Activated CD4-positive, alpha-beta memory T cell treated with anti-CD3 and anti-CD28 coated beads, Interleukin-2, amount 10 ng/mL, durations not matched to agents 7 days and 5 days (primary cell): ENCODE measurements at regions of chr2 and their contacts with region 1.

Region 1: DNA sequence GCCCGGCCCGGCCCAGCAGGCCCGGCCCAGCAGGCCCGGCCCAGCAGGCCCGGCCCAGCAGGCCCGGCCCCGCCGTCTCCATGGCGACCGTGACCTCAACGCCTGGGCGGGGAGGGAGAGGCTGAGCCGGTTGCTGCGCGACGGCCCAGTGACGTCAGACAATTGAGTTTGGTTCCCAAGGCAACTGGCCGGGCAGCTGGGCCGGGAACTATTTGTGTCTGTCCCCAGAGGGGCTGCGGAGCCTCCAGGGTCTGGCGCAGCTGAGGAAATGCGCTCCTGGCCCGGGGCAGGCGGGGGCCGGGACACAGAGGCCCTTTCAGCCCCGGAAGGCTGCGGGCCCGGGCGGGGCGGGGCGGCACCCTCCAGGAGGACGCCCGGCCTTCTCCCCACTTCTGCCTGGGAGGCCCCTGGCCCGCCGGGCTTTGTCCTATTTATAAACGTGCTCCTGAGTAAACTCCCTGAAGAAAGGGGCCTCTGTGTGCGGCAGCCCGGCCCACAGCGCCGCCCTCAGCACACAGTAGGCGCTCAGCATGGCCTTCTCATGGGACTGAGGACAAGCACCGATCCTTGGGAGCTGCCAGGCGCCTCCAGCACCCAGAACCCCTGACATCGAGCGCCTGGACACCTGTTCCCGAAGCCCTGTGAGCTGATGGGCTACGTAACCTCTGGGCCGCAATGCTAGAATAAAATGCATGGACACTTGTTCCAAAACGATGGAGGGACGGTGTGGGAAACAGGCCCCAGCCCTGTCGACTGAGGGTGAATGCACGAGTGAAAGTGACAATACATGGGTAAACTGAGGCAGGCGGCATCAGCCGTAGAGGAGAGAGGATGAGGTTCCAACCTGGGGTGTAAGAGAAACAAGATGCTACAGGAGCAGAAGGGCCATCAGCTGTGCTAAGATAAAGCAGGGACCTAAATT is 12.3 kb downstream of the TEX44 start:
- DNase-seq: peak; percentile 95
- H3K4me3 Mint-ChIP-seq: peak overlapping the region; percentile 66
- H3K27ac Mint-ChIP-seq: peak overlapping the region; percentile 31
- H3K4me1 Mint-ChIP-seq: peaks cover 17% of the 10 kb centered on the region
- H3K27me3 Mint-ChIP-seq: no peaks in the 10 kb centered on the region

Region 2: GRCh38 chr2:231482806-231483391 is 122.0 kb before region 1 on chr2:
- CTCF ChIA-PET with region 1: interaction called, 20 read pairs
- POLR2A ChIA-PET with region 1: interaction called, 6 read pairs
- DNase-seq: peak; percentile 78
- H3K4me3 Mint-ChIP-seq: peak overlapping the region; percentile 76
- H3K27ac Mint-ChIP-seq: peak overlapping the region; percentile 83
- H3K4me1 Mint-ChIP-seq: peaks cover 23% of the 10 kb centered on the region
- H3K27me3 Mint-ChIP-seq: no peaks in the 10 kb centered on the region

Region 3: DNA sequence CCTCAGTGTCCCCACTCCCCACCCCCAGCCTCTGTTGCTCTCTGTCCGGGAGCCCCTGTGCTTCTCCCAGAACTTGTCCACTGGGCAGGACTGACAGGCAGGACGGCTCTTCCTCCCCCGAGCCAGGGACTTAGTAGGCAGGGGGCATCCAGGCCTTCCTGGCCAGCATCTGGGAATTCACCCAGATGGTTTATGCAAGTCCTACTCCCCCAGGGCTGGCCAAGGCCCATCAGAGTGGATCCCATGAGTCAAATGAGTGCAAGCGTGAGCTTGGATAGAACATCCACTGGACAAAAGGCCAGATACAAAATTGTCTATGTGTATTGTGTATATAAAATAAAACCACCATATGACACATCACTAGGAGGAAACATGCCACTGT is 82.2 kb before region 1 on chr2:
- CTCF ChIA-PET with region 1: interaction called, 52 read pairs
- POLR2A ChIA-PET with region 1: interaction called, 5 read pairs
- DNase-seq: no peak
- H3K4me3 Mint-ChIP-seq: no peak overlapping the region
- H3K27ac Mint-ChIP-seq: no peak overlapping the region
- H3K4me1 Mint-ChIP-seq: peaks cover 57% of the 10 kb centered on the region
- H3K27me3 Mint-ChIP-seq: peaks cover 23% of the 10 kb centered on the region

Region 4: GRCh38 chr2:231563378-231563961 is 41.5 kb before region 1 on chr2:
- CTCF ChIA-PET with region 1: interaction called, 35 read pairs
- POLR2A ChIA-PET with region 1: interaction called, 5 read pairs
- DNase-seq: peak; percentile 45
- H3K4me3 Mint-ChIP-seq: no peak overlapping the region
- H3K27ac Mint-ChIP-seq: no peak overlapping the region
- H3K4me1 Mint-ChIP-seq: peaks cover 6% of the 10 kb centered on the region
- H3K27me3 Mint-ChIP-seq: peaks cover 5% of the 10 kb centered on the region

Region 5: GRCh38 chr2:231583982-231584381 is 21.0 kb before region 1 on chr2:
- CTCF ChIA-PET with region 1: interaction called, 38 read pairs
- POLR2A ChIA-PET with region 1: no interaction called
- DNase-seq: no peak
- H3K4me3 Mint-ChIP-seq: no peak overlapping the region
- H3K27ac Mint-ChIP-seq: no peak overlapping the region
- H3K4me1 Mint-ChIP-seq: peaks cover 4% of the 10 kb centered on the region
- H3K27me3 Mint-ChIP-seq: peaks cover 15% of the 10 kb centered on the region

Region 6: GRCh38 chr2:231590619-231591018 is 14.3 kb before region 1 on chr2:
- CTCF ChIA-PET with region 1: interaction called, 38 read pairs
- POLR2A ChIA-PET with region 1: no interaction called
- DNase-seq: no peak
- H3K4me3 Mint-ChIP-seq: no peak overlapping the region
- H3K27ac Mint-ChIP-seq: no peak overlapping the region
- H3K4me1 Mint-ChIP-seq: no peaks in the 10 kb centered on the region
- H3K27me3 Mint-ChIP-seq: peaks cover 2% of the 10 kb centered on the region

Region 7: DNA sequence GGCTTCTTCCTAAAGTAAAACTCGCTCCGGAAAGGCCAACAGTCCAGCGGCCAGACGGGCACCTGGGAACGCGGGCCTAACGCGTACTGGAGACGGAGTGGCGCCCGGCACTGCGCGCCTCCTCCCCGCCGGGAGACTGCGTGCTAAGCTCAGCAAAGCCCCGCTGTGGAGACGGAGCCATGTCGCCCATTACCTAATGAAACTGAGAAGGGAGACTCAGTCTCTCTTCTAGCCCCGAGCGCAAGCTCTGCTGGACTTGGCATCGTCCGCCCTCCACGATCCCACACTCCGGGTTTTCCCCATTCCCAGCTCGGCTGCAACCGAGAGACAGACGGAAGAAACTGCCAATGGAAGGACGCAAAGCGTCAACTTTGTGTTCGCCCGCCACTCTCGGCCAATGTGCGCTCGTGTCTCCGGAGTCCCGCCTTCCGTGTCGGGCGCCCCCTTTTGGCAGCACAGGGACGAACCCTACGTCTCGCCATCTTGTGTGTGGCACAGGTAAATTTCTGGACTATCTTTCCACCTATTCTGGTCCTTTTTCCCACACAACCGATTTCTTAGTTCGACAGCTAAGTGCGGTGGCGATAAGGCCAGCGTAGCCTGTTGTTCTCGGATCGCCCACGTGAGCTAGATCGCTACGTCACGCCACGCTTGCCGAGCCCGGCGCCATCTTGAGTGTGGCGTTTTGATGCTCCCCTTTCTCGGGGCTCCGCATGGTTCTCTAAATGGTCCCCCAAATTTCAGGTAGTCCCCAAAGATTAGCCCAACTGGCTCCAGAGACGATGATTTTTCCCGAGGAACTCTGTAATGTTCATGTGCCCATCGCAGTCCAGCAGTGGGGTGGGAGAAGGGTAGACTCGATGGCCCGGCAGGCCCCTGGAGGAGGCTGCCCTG is 102.0 kb after region 1 on chr2:
- CTCF ChIA-PET with region 1: interaction called, 144 read pairs
- POLR2A ChIA-PET with region 1: interaction called, 83 read pairs
- DNase-seq: peak; percentile 97
- H3K4me3 Mint-ChIP-seq: peak overlapping the region; percentile 91
- H3K27ac Mint-ChIP-seq: peak overlapping the region; percentile 100
- H3K4me1 Mint-ChIP-seq: peaks cover 20% of the 10 kb centered on the region
- H3K27me3 Mint-ChIP-seq: no peaks in the 10 kb centered on the region

Region 8: GRCh38 chr2:232042911-232043564 is 438.1 kb after region 1 on chr2:
- CTCF ChIA-PET with region 1: no interaction called
- POLR2A ChIA-PET with region 1: no interaction called
- DNase-seq: no peak
- H3K4me3 Mint-ChIP-seq: no peak overlapping the region
- H3K27ac Mint-ChIP-seq: no peak overlapping the region
- H3K4me1 Mint-ChIP-seq: peaks cover 6% of the 10 kb centered on the region
- H3K27me3 Mint-ChIP-seq: no peaks in the 10 kb centered on the region